ENCODE measurements at regions of chr2 and their contacts with region 1.

Region 1: DNA sequence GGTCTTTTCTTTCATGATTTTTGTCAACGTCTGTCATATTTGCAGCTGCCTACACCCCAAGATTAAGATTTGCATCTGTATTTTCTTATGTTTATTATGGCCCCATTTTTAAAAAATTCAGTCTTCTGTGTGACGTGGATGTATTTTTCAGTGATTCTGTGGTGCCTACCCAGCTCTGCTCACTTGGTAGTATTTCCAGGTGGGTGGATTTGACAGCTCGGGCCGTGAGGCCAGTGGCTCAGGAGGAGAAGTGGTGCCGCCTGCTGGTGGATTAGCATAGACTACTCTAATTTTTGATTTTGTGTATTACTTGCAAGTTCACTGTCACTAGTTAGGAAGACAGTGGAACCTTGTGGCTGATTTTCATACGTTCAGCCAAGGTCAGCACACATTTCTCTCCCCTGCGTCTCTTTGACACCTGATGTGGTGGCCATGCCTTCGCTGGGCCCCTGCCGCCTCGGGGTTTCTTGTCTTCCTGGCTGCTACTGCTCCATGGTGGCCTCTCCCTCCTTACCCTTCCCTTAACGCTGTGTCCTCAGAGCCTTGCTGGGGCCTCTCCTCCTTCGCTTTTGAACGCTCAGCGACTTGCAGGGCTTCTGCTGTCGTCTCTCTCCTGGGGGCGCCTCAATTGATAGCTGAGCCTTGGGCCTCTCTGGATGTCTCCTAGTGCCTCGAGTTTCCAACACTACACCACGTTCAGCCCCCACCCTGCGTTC is 89.3 kb downstream of the DGKD start:
- DNase-seq: peak; percentile 70 to 85
- H3K4me3 ChIP-seq: no peak overlapping the region
- H3K27ac ChIP-seq: no peak overlapping the region
- H3K4me1 ChIP-seq: no peaks in the 10 kb centered on the region
- H3K27me3 ChIP-seq: no peaks in the 10 kb centered on the region
- CTCF ChIP-seq: peak; percentile 97

Region 2: GRCh38 chr2:232761301-232761907 is 682.2 kb before region 1 on chr2:
- CTCF ChIA-PET with region 1: no interaction called
- POLR2A ChIA-PET with region 1: no interaction called
- intact Hi-C with region 1: loop called (anchors 1 kb)
- DNase-seq: peak; percentile 47 to 71
- H3K4me3 ChIP-seq: no peak overlapping the region
- H3K27ac ChIP-seq: no peak overlapping the region
- H3K4me1 ChIP-seq: no peaks in the 10 kb centered on the region
- H3K27me3 ChIP-seq: no peaks in the 10 kb centered on the region
- CTCF ChIP-seq: peak; percentile 85

Region 3: GRCh38 chr2:233353769-233354499 is 89.7 kb before region 1 on chr2 and contains the start of gene DGKD:
- CTCF ChIA-PET with region 1: interaction called, 6 read pairs
- POLR2A ChIA-PET with region 1: interaction called, 3 read pairs
- intact Hi-C with region 1: loop called (anchors 1 kb)
- DNase-seq: peak; percentile 78 to 79
- H3K4me3 ChIP-seq: peak within 1 kb of the TSS; percentile 67
- H3K27ac ChIP-seq: peak within 1 kb of the TSS; percentile 65
- H3K4me1 ChIP-seq: peaks cover 79% of the 10 kb centered on the region
- H3K27me3 ChIP-seq: no peaks in the 10 kb centered on the region
- CTCF ChIP-seq: peak; percentile 76
- total RNA-seq, gene DGKD: 43.1 and 59.5 TPM in 2 replicates

Region 4: GRCh38 chr2:233584210-233584729 is 140.6 kb after region 1 on chr2:
- CTCF ChIA-PET with region 1: no interaction called
- POLR2A ChIA-PET with region 1: no interaction called
- intact Hi-C with region 1: no loop called
- DNase-seq: no peak
- H3K4me3 ChIP-seq: no peak overlapping the region
- H3K27ac ChIP-seq: no peak overlapping the region
- H3K4me1 ChIP-seq: no peaks in the 10 kb centered on the region
- H3K27me3 ChIP-seq: no peaks in the 10 kb centered on the region
- CTCF ChIP-seq: no peak

Region 5: DNA sequence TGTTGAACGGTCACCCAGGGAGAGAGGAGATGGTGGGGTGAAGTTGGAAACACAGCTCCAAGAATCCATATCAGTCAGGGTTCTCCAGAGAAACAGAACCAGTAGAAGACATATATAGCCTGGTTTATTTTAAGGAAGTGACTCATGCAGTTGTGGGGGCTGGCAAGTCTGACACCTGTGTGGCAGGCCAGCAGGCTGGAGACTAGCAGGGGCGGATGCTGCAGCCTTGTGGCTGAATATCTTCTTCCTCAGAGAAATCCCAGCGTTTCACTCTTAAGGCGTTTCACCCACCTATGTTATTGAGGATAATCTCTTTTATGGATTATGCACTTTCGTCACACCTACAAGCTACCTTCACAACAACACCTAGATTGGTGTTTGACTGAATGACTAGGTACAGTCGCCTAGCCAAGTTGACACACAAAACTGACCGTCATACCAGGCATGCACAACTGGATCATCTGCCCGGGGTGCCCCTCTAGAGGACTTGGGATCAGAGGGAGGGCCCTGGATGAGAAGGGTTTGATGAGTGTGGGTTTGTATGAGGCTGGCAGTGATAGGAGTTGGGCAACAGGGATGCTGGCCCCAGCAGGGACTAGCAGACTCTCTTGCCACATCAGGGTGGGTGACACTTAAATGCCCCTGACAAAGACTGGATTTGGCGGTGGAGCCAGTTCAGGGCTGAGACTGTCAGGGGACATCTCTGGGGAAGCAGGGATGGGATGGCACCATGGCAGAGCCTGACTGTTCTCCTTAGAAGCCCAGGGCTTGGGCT is 357.9 kb after region 1 on chr2:
- CTCF ChIA-PET with region 1: no interaction called
- POLR2A ChIA-PET with region 1: no interaction called
- intact Hi-C with region 1: loop called (anchors 1 kb)
- DNase-seq: peak; percentile 46 to 64
- H3K4me3 ChIP-seq: no peak overlapping the region
- H3K27ac ChIP-seq: no peak overlapping the region
- H3K4me1 ChIP-seq: peaks cover 7% of the 10 kb centered on the region
- H3K27me3 ChIP-seq: no peaks in the 10 kb centered on the region
- CTCF ChIP-seq: no peak

Measured in PC-9 (cell line).